B cell (primary cell): ENCODE measurements at regions of chr15 and their contacts with region 1.

Region 1: GRCh38 chr15:39756806-39757522 is 25.7 kb downstream of the FSIP1 start:
- DNase-seq: peak; percentile 56
- ATAC-seq: no peak
- H3K4me3 ChIP-seq: no peak overlapping the region
- H3K4me3 Mint-ChIP-seq: no peak overlapping the region
- H3K27ac ChIP-seq: no peak overlapping the region
- H3K27ac Mint-ChIP-seq: no peak overlapping the region
- H3K4me1 ChIP-seq: no peaks in the 10 kb centered on the region
- H3K4me1 Mint-ChIP-seq: no peaks in the 10 kb centered on the region
- H3K27me3 ChIP-seq: no peaks in the 10 kb centered on the region
- H3K27me3 Mint-ChIP-seq: peaks cover 14% of the 10 kb centered on the region
- CTCF ChIP-seq: peak; percentile 95

Region 2: GRCh38 chr15:38699633-38700230 is 1057.2 kb before region 1 on chr15:
- CTCF ChIA-PET with region 1: interaction called, 28 read pairs
- POLR2A ChIA-PET with region 1: no interaction called
- intact Hi-C with region 1: no loop called
- DNase-seq: peak; percentile 77
- ATAC-seq: peak; percentile 78
- H3K4me3 ChIP-seq: no peak overlapping the region
- H3K4me3 Mint-ChIP-seq: no peak overlapping the region
- H3K27ac ChIP-seq: no peak overlapping the region
- H3K27ac Mint-ChIP-seq: no peak overlapping the region
- H3K4me1 ChIP-seq: no peaks in the 10 kb centered on the region
- H3K4me1 Mint-ChIP-seq: peaks cover 2% of the 10 kb centered on the region
- H3K27me3 ChIP-seq: no peaks in the 10 kb centered on the region
- H3K27me3 Mint-ChIP-seq: peaks cover 3% of the 10 kb centered on the region
- CTCF ChIP-seq: peak; percentile 94

Region 3: DNA sequence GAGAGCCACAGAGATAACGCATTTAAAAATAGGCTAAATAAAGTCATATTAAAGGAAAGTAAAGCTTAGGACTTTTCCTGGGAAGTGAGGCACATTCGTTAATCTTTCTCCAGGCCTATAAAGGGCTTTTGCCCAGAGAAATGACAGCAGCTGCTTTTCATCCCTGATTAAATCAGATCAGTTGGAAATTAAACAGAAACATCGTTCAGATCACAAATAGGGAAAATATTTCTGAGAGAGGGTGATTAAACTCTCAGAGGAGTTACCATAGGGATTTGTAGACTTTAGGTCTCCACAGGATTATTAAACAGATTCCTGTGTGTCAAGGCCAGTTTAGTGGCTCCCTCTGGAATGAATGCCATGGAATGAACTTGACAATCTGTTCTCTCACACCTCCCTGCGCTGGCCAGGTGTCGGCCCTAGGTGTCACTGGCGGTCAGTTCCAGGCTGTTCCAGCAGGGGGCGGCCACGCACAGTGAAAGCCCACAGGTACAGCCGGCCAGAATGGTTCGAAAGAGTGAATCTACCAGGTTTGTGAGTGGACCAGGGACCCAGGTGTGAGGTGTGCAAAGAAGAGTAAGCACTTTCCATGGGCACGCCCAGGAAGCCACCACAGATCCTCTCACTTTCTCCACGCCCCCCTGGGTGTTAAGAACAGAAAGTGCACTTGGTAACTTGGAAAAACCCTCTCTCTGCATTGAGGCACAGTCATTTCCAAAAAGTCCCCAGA is 939.4 kb before region 1 on chr15:
- CTCF ChIA-PET with region 1: no interaction called
- POLR2A ChIA-PET with region 1: no interaction called
- intact Hi-C with region 1: loop called (anchors 5 kb)
- DNase-seq: peak; percentile 57
- ATAC-seq: peak; percentile 57
- H3K4me3 ChIP-seq: no peak overlapping the region
- H3K4me3 Mint-ChIP-seq: no peak overlapping the region
- H3K27ac ChIP-seq: no peak overlapping the region
- H3K27ac Mint-ChIP-seq: no peak overlapping the region
- H3K4me1 ChIP-seq: peaks cover 0 to 4% of the 10 kb centered on the region in 2 donors
- H3K4me1 Mint-ChIP-seq: no peaks in the 10 kb centered on the region
- H3K27me3 ChIP-seq: peaks cover 0 to 2% (median 0%) of the 10 kb centered on the region in 4 experiments
- H3K27me3 Mint-ChIP-seq: peaks cover 24% of the 10 kb centered on the region
- CTCF ChIP-seq: peak; percentile 87

Region 4: GRCh38 chr15:39736412-39737197 is 20.4 kb before region 1 on chr15:
- CTCF ChIA-PET with region 1: interaction called, 12 read pairs
- POLR2A ChIA-PET with region 1: interaction called, 5 read pairs
- intact Hi-C with region 1: no loop called
- DNase-seq: no peak
- ATAC-seq: no peak
- H3K4me3 ChIP-seq: no peak overlapping the region
- H3K4me3 Mint-ChIP-seq: no peak overlapping the region
- H3K27ac ChIP-seq: no peak overlapping the region
- H3K27ac Mint-ChIP-seq: no peak overlapping the region
- H3K4me1 ChIP-seq: no peaks in the 10 kb centered on the region
- H3K4me1 Mint-ChIP-seq: no peaks in the 10 kb centered on the region
- H3K27me3 ChIP-seq: no peaks in the 10 kb centered on the region
- H3K27me3 Mint-ChIP-seq: no peaks in the 10 kb centered on the region
- CTCF ChIP-seq: no peak